Naive thymus-derived CD4-positive, alpha-beta T cell (primary cell): ENCODE measurements at regions of chr17 and their contacts with region 1.

Region 1: DNA sequence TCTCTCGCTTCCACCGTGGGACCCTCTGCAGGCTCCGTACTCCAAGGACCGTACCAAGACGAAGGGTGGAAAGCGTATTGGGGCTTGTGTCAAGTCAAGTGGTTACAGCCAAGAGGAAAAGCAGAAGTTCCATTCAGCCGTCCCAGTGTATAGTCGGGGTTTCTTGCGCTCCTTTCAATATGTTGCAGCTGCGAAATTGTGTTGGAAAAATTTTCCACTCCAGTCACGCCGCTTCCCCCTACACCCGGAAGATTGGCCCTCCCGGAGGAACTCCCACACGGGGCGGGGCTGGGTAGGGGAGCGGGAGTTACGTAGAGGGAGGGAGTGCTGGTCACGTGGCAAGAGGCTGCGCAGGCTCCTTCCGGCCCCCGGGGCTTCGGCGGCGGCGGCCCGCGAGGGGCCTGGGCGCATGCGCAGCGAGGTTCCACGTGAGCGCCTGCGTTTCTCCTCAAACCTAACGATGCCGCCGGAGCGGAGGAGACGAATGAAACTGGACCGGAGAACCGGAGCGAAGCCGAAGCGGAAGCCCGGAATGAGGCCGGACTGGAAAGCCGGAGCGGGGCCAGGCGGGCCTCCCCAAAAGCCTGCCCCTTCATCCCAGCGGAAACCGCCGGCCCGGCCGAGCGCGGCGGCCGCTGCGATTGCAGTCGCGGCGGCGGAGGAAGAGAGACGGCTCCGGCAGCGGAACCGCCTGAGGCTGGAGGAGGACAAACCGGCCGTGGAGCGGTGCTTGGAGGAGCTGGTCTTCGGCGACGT is at the start of gene UTP18:
- DNase-seq: peak; percentile 91 to 98 (median 97)
- ATAC-seq: peak; percentile 92
- H3K4me3 ChIP-seq: peak within 1 kb of the TSS; percentile 89
- H3K4me3 Mint-ChIP-seq: peak within 1 kb of the TSS; percentile 88 to 98 (median 96)
- H3K27ac ChIP-seq: peak within 1 kb of the TSS; percentile 89
- H3K27ac Mint-ChIP-seq: peak within 1 kb of the TSS; percentile 96 to 99 (median 98)
- H3K4me1 ChIP-seq: peaks cover 35 to 36% of the 10 kb centered on the region in 2 donors
- H3K4me1 Mint-ChIP-seq: peaks cover 45 to 80% (median 61%) of the 10 kb centered on the region in 7 donors
- H3K27me3 ChIP-seq: no peaks in the 10 kb centered on the region
- H3K27me3 Mint-ChIP-seq: no peaks in the 10 kb centered on the region
- total RNA-seq, gene UTP18: 31.1 to 46.2 (median 45.5) TPM

Region 2: GRCh38 chr17:50719144-50719923 is 541.0 kb before region 1 on chr17 and contains the start of gene LUC7L3:
- CTCF ChIA-PET with region 1: no interaction called
- POLR2A ChIA-PET with region 1: interaction called, 3 read pairs
- intact Hi-C with region 1: loop called (anchors 1 kb)
- DNase-seq: peak; percentile 88 to 97 (median 95)
- ATAC-seq: peak; percentile 98
- H3K4me3 ChIP-seq: peak within 1 kb of the TSS; percentile 92
- H3K4me3 Mint-ChIP-seq: peak within 1 kb of the TSS; percentile 84 to 99 (median 98)
- H3K27ac ChIP-seq: peak within 1 kb of the TSS; percentile 95
- H3K27ac Mint-ChIP-seq: peak within 1 kb of the TSS; percentile 93 to 100 (median 99)
- H3K4me1 ChIP-seq: peaks cover 22 to 26% of the 10 kb centered on the region in 2 donors
- H3K4me1 Mint-ChIP-seq: peaks cover 19 to 37% (median 27%) of the 10 kb centered on the region in 7 donors
- H3K27me3 ChIP-seq: no peaks in the 10 kb centered on the region
- H3K27me3 Mint-ChIP-seq: no peaks in the 10 kb centered on the region
- total RNA-seq, gene LUC7L3: 131 to 331 (median 149) TPM

Region 3: DNA sequence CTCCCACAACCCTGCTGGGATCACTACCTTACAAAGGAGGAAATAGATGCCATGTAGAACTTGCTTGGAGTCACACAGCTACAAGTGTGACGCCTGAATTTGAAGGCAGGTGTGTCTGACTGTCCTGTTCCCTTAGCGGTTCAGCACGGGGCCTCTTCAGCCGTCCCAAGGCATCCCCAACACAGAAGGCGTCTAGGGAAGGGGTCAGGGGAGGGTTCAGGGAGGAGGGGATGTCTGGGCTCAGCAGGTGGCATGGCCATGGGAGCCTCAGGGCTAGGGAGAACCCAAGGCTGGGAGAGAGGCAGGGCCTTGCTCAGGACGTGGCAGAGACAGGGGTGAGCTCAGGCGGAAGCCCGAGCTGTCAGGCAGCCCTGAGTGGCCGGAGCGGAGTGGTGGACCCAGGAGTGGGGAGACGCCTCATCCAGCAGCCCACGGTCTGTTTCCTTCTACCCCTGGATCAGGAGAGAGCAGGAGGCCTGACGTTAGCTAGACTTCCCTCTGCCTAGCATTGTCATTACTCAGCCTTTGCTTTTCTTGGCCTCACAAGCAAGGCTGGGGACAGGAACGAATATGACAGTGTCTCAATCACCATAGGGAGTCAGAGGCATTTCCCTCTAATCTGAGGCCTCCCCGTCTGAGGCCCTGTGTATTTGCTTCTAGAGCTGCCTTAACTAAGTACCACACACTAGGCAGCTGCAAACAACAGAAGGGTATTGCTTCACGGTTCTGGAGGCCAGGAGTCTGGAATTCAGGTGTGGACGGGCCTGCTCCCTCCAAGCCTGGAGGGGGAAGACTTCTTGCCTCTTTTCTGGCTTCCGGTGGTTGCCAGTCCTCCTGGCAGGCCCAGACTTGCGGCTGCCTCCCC is 461.6 kb before region 1 on chr17:
- CTCF ChIA-PET with region 1: no interaction called
- POLR2A ChIA-PET with region 1: no interaction called
- intact Hi-C with region 1: no loop called
- DNase-seq: no peak
- ATAC-seq: no peak
- H3K4me3 ChIP-seq: no peak overlapping the region
- H3K4me3 Mint-ChIP-seq: no peak overlapping the region
- H3K27ac ChIP-seq: no peak overlapping the region
- H3K27ac Mint-ChIP-seq: no peak overlapping the region
- H3K4me1 ChIP-seq: no peaks in the 10 kb centered on the region
- H3K4me1 Mint-ChIP-seq: no peaks in the 10 kb centered on the region
- H3K27me3 ChIP-seq: no peaks in the 10 kb centered on the region
- H3K27me3 Mint-ChIP-seq: peaks cover 0 to 2% (median 0%) of the 10 kb centered on the region in 5 donors

Region 4: DNA sequence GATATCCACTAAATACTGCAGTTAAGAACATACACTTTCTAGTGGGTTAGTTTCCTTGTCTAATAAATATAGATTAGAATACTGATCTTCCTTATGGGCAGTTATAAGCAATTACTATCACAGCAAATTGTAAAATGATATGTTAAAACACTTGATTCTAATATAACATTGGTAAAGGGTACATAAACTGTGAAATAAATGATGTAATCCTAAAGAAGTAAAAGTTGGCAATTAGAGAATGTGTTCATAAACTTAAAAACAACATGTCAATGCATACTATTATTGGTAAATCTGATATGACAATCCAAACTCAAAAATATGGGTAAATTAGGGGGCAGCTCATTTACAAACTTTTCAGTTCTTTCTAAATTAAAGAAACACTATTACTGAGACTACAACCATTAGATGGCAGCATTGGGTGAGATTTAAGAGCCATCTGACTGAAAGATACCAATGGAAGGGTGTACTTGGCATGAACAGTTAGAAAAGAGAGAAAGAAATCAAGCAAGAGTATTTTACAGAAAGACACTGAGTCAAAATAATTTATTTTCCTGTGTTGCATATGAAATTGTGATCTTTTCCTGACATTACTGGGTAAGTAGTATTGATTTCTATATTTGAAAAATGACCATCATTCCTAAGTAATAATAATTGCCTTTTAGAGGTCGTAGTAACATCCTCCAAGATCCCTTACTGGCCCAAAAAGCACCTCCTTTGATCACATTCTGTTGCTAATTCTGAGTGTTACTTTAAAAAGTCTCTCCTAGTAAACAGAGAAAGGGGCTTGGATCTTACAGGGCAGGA is 259.3 kb before region 1 on chr17:
- CTCF ChIA-PET with region 1: no interaction called
- POLR2A ChIA-PET with region 1: no interaction called
- intact Hi-C with region 1: loop called (anchors 2 to 10 kb)
- DNase-seq: peak in 7 of 9 donors; percentile 55 to 74 (median 65)
- ATAC-seq: peak; percentile 82
- H3K4me3 ChIP-seq: no peak overlapping the region
- H3K4me3 Mint-ChIP-seq: no peak overlapping the region
- H3K27ac ChIP-seq: no peak overlapping the region
- H3K27ac Mint-ChIP-seq: peak overlapping the region in 3 of 9 donors; percentile 11 to 60 (median 30)
- H3K4me1 ChIP-seq: no peaks in the 10 kb centered on the region
- H3K4me1 Mint-ChIP-seq: peaks cover 0 to 6% (median 5%) of the 10 kb centered on the region in 7 donors
- H3K27me3 ChIP-seq: no peaks in the 10 kb centered on the region
- H3K27me3 Mint-ChIP-seq: no peaks in the 10 kb centered on the region

Region 5: DNA sequence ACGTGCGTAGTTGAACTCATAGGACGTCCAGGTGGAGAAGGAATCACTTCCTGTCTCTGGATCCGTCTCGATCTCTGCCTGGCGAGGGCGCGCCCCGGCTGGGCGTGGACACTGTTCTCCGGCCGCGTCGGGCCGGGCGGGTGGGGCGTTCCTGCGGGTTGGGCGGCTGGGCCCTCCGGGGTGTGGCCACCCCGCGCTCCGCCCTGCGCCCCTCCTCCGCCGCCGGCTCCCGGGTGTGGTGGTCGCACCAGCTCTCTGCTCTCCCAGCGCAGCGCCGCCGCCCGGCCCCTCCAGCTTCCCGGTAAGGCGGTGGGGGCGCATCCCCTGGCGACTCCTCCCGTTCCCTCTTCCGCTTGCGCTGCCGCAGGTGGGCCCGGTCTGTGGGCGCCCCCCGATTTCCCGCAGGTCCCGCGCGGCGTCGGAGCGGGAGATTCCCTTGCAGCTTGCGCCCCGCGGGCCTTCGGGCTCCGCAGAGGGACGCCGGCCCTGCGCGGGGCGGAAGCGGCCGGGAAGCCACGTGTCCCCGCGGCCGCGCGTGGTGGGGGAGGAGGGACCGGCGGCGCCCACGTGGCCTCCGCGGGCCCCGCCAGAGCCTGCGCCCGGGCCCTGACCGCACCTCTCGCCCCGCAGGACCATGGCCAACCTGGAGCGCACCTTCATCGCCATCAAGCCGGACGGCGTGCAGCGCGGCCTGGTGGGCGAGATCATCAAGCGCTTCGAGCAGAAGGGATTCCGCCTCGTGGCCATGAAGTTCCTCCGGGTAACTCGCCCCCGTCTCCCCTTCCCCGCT is 93.9 kb before region 1 on chr17 and contains the start of gene NME2:
- CTCF ChIA-PET with region 1: no interaction called
- POLR2A ChIA-PET with region 1: interaction called, 4 read pairs
- intact Hi-C with region 1: loop called (anchors 1 kb)
- DNase-seq: peak; percentile 42 to 87 (median 50)
- ATAC-seq: peak; percentile 85
- H3K4me3 ChIP-seq: peak within 1 kb of the TSS; percentile 89
- H3K4me3 Mint-ChIP-seq: peak within 1 kb of the TSS; percentile 87 to 98 (median 95)
- H3K27ac ChIP-seq: peak within 1 kb of the TSS; percentile 80
- H3K27ac Mint-ChIP-seq: peak within 1 kb of the TSS; percentile 89 to 99 (median 95)
- H3K4me1 ChIP-seq: peaks cover 0 to 5% of the 10 kb centered on the region in 2 donors
- H3K4me1 Mint-ChIP-seq: peaks cover 0 to 36% (median 24%) of the 10 kb centered on the region in 7 donors
- H3K27me3 ChIP-seq: no peaks in the 10 kb centered on the region
- H3K27me3 Mint-ChIP-seq: no peaks in the 10 kb centered on the region
- total RNA-seq, gene NME2: 133 to 457 (median 179) TPM

Region 6: DNA sequence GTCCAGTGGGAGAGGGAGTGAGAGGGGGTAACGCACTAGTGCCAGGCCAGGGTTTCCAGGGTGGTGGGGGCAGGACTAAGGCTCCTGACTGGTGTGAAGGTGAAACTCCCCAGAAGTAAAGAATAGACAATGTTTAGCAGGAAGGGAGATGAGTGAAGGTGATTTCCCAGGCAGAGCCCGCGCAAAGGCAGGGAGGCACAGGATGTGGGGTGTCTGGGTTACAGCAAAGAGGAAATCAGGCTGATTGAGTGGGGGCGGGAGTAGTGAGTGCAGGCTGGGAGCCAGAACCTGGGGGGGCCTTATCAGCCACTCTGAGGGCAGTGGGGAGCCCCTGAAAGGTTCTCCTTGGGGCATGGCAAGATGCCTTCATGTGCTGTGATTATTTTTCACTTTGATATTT is 167.6 kb after region 1 on chr17:
- CTCF ChIA-PET with region 1: no interaction called
- POLR2A ChIA-PET with region 1: no interaction called
- intact Hi-C with region 1: loop called (anchors 1 to 5 kb)
- DNase-seq: peak; percentile 45 to 90 (median 72)
- ATAC-seq: peak; percentile 93
- H3K4me3 ChIP-seq: peak overlapping the region; percentile 32
- H3K4me3 Mint-ChIP-seq: peak overlapping the region; percentile 26 to 84 (median 78)
- H3K27ac ChIP-seq: peak overlapping the region; percentile 87
- H3K27ac Mint-ChIP-seq: peak overlapping the region; percentile 91 to 100 (median 97)
- H3K4me1 ChIP-seq: peaks cover 12 to 48% of the 10 kb centered on the region in 2 donors
- H3K4me1 Mint-ChIP-seq: peaks cover 34 to 77% (median 61%) of the 10 kb centered on the region in 7 donors
- H3K27me3 ChIP-seq: no peaks in the 10 kb centered on the region
- H3K27me3 Mint-ChIP-seq: no peaks in the 10 kb centered on the region

Region 7: GRCh38 chr17:51850201-51850600 is 589.9 kb after region 1 on chr17:
- CTCF ChIA-PET with region 1: no interaction called
- POLR2A ChIA-PET with region 1: no interaction called
- intact Hi-C with region 1: no loop called
- DNase-seq: no peak
- ATAC-seq: no peak
- H3K4me3 ChIP-seq: no peak overlapping the region
- H3K4me3 Mint-ChIP-seq: no peak overlapping the region
- H3K27ac ChIP-seq: no peak overlapping the region
- H3K27ac Mint-ChIP-seq: no peak overlapping the region
- H3K4me1 ChIP-seq: no peaks in the 10 kb centered on the region
- H3K4me1 Mint-ChIP-seq: no peaks in the 10 kb centered on the region
- H3K27me3 ChIP-seq: no peaks in the 10 kb centered on the region
- H3K27me3 Mint-ChIP-seq: peaks cover 0 to 40% (median 27%) of the 10 kb centered on the region in 5 donors

Region 8: DNA sequence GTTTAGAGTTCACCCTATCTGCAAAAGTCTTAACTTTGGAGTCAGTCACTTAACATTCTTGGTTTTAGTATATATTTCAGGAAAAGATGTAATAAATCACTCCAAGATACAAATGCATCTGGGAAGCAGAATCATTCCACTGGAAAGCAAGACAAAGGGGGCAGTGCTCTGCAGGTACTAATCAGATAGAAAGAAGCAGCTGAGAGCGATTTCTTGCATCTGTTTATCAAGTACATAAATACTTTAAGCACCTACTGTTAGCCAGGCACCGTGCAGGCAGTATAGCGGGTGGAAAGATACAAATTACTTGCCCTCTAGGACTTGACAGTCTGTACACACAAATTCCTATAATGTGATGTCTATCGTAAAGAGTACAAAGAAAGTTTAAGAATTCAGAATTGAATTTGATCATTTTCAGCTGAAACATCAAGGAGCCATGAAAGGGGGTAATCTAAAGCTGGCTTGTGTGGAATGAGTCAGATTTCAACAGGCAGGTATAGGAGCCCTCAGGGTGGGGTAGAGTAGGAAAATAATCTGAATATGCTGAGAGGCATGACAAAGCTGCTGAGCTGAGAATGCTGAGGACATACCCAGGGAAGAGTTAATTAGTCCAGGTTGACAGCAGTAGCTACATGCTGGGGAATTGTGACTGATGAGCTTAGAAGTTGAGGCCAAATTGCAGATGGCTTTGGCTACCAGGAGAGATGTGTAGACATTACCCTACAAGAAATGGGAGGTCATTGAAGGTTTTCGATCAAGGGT is 788.0 kb after region 1 on chr17:
- CTCF ChIA-PET with region 1: no interaction called
- POLR2A ChIA-PET with region 1: no interaction called
- intact Hi-C with region 1: no loop called
- DNase-seq: no peak
- ATAC-seq: no peak
- H3K4me3 ChIP-seq: no peak overlapping the region
- H3K4me3 Mint-ChIP-seq: no peak overlapping the region
- H3K27ac ChIP-seq: no peak overlapping the region
- H3K27ac Mint-ChIP-seq: no peak overlapping the region
- H3K4me1 ChIP-seq: no peaks in the 10 kb centered on the region
- H3K4me1 Mint-ChIP-seq: no peaks in the 10 kb centered on the region
- H3K27me3 ChIP-seq: no peaks in the 10 kb centered on the region
- H3K27me3 Mint-ChIP-seq: peaks cover 0 to 27% (median 20%) of the 10 kb centered on the region in 5 donors

Region 9: DNA sequence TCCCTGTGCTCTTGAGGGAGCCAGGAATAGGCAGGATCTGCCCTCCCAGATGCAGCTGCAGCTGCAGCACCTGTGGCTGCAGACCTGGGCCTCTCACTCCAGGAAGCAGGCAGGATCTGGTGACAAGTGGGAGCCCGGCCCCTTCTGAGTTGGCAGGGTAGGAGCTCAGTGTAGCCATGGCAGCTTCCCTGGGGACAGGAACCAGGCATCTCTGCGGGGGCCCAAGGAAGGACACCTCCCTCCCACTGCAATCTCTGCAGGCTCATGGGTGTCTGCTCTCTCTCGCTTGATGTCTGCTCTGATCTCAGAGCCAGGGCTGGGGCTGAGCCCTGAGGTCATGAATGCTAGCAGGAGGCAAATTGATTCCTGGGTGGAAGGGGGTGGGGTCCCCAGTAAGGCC is 1490.7 kb after region 1 on chr17:
- CTCF ChIA-PET with region 1: no interaction called
- POLR2A ChIA-PET with region 1: no interaction called
- intact Hi-C with region 1: no loop called
- DNase-seq: no peak
- ATAC-seq: no peak
- H3K4me3 ChIP-seq: no peak overlapping the region
- H3K4me3 Mint-ChIP-seq: no peak overlapping the region
- H3K27ac ChIP-seq: no peak overlapping the region
- H3K27ac Mint-ChIP-seq: no peak overlapping the region
- H3K4me1 ChIP-seq: no peaks in the 10 kb centered on the region
- H3K4me1 Mint-ChIP-seq: no peaks in the 10 kb centered on the region
- H3K27me3 ChIP-seq: no peaks in the 10 kb centered on the region
- H3K27me3 Mint-ChIP-seq: no peaks in the 10 kb centered on the region